ENCODE measurements at regions of chr6 and their contacts with region 1.

Region 1: GRCh38 chr6:33391278-33391921 is at the start of gene KIFC1:
- DNase-seq: peak; percentile 100
- ATAC-seq: peak; percentile 99
- H3K4me3 ChIP-seq: no peak within 1 kb of the TSS
- H3K27ac ChIP-seq: peak within 1 kb of the TSS in 1 of 2 donors; percentile 79
- H3K4me1 ChIP-seq: no peaks in the 10 kb centered on the region
- H3K27me3 ChIP-seq: no peaks in the 10 kb centered on the region
- total RNA-seq, gene KIFC1: 1.3 to 2.0 TPM

Region 2: GRCh38 chr6:33367009-33367714 is 24.2 kb before region 1 on chr6:
- intact Hi-C with region 1: no loop called
- DNase-seq: no peak
- ATAC-seq: no peak
- H3K4me3 ChIP-seq: no peak overlapping the region
- H3K27ac ChIP-seq: no peak overlapping the region
- H3K4me1 ChIP-seq: no peaks in the 10 kb centered on the region
- H3K27me3 ChIP-seq: no peaks in the 10 kb centered on the region

Region 3: DNA sequence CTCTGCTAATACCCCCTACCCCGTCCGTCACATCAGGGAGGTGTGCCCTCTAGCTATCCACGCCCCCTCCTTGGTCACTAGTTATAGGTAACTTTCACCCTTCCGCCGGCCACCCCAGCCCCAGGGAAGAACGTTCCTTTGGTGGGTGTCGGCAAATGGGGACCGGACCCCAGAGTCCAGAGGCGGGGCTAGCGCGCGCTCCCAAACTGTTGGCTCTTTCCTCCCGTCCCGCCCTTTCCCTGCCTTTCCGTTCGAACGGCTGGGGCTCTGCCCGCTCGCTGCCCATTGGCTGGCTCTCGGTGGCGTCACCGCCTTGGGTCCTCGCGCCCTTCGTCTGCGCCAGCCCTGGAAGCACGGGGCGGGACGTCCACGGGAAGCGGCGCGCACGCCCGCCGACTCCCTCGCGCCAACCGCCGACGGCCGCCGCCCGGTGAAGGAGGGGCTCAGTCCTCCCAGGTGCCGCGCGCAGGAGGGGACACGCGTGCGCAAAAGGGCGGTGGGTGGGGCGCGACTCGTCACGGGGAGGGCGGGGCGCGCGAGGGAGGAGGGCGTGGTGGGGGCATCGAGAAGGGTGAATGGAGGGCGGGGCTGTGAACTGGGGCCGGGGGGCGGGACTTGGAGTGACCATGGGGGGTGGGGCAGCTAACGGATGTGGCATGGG is 18.8 kb after region 1 on chr6:
- intact Hi-C with region 1: loop called in 1 of 2 experiments (anchors 1 kb)
- DNase-seq: peak; percentile 99
- ATAC-seq: peak; percentile 97
- H3K4me3 ChIP-seq: peak overlapping the region; percentile 79 to 99
- H3K27ac ChIP-seq: peak overlapping the region in 1 of 2 donors; percentile 54
- H3K4me1 ChIP-seq: no peaks in the 10 kb centered on the region
- H3K27me3 ChIP-seq: no peaks in the 10 kb centered on the region

Region 4: GRCh38 chr6:33425668-33426577 is 34.5 kb after region 1 on chr6:
- intact Hi-C with region 1: loop called (anchors 1 to 2 kb)
- DNase-seq: peak; percentile 92 to 96
- ATAC-seq: peak; percentile 87
- H3K4me3 ChIP-seq: peak overlapping the region; percentile 42 to 44
- H3K27ac ChIP-seq: peak overlapping the region; percentile 68 to 72
- H3K4me1 ChIP-seq: peaks cover 1 to 3% of the 10 kb centered on the region in 2 donors
- H3K27me3 ChIP-seq: no peaks in the 10 kb centered on the region

Region 5: GRCh38 chr6:33433544-33434191 is 42.3 kb after region 1 on chr6:
- intact Hi-C with region 1: loop called in 1 of 2 experiments (anchors 2 kb)
- DNase-seq: no peak
- ATAC-seq: peak; percentile 50
- H3K4me3 ChIP-seq: no peak overlapping the region
- H3K27ac ChIP-seq: no peak overlapping the region
- H3K4me1 ChIP-seq: no peaks in the 10 kb centered on the region
- H3K27me3 ChIP-seq: no peaks in the 10 kb centered on the region

Measured in aorta (tissue), 5 donors.